H1 (cell line): ENCODE measurements at regions of chr5 and their contacts with region 1.

Region 1: GRCh38 chr5:150409638-150410523 is 2.8 kb downstream of the CD74 start:
- DNase-seq: peak; percentile 44 to 80
- H3K4me3 ChIP-seq: peak overlapping the region; percentile 9 to 37 (median 29); a peak in 6 of 8 replicates
- H3K27ac ChIP-seq: no peak overlapping the region
- H3K4me1 ChIP-seq: peaks cover 8 to 27% (median 13%) of the 10 kb centered on the region in 4 experiments
- H3K27me3 ChIP-seq: no peaks in the 10 kb centered on the region
- CTCF ChIP-seq: no peak
- EP300 ChIP-seq: no peak
- POLR2A ChIP-seq: no peak
- RAD21 ChIP-seq: no peak

Region 2: DNA sequence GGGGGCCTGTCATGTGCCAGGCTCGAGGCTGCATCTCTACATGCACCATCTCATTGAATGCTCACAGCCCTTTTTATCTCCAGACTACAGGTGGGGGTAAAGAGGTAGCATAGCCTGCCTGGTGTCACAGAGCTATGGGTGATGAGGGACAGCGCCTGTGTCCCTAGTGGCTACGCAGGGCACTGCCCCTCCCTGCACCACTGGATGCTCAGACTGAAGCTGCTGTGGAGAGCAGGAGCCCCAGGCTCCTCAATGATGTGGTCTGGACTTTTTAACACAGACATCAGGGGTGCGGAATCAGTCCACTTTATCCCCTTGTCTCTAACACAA is 123.0 kb before region 1 on chr5:
- CTCF ChIA-PET with region 1: no interaction called
- POLR2A ChIA-PET with region 1: no interaction called
- DNase-seq: peak in 1 of 2 experiments; percentile 57
- H3K4me3 ChIP-seq: no peak overlapping the region
- H3K27ac ChIP-seq: no peak overlapping the region
- H3K4me1 ChIP-seq: peaks cover 0 to 3% (median 0%) of the 10 kb centered on the region in 4 experiments; a peak in 2 of 7 replicates
- H3K27me3 ChIP-seq: no peaks in the 10 kb centered on the region; a peak in 1 of 7 replicates
- CTCF ChIP-seq: peak in 2 of 3 experiments; percentile 93 to 97; a peak in 3 of 4 replicates
- EP300 ChIP-seq: no peak
- POLR2A ChIP-seq: no peak
- RAD21 ChIP-seq: peak; percentile 55 to 68

Region 3: DNA sequence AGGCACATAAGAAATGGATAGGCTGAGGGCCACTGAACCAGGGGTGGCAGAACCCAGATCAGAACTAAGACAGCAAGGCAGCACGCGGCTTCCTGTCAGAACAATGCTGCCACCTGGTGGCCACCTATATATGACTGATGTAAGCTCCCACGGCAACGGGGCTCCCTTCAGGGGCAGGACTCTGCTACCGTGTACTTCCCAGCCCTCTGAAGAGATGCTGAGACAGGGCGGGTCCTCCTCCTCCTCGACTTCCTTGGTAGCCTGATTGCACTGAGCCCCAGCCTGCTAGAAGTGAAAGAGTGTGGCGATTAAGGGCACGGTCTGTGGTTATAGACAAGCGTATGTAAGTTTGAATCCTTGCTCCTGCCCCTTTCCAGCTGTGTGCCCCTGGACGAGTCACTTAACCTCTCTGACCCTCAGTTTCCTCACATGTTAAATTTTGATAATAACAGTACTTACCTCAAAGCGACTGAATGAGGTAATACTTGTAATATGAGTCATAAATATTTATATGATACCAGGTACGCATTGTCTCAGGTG is 26.3 kb after region 1 on chr5:
- CTCF ChIA-PET with region 1: interaction called, 245 read pairs
- POLR2A ChIA-PET with region 1: interaction called, 17 read pairs
- DNase-seq: peak; percentile 75 to 97
- H3K4me3 ChIP-seq: no peak overlapping the region
- H3K27ac ChIP-seq: no peak overlapping the region
- H3K4me1 ChIP-seq: peaks cover 0 to 4% (median 1%) of the 10 kb centered on the region in 4 experiments; a peak in 2 of 7 replicates
- H3K27me3 ChIP-seq: no peaks in the 10 kb centered on the region
- CTCF ChIP-seq: peak; percentile 85 to 93 (median 88)
- EP300 ChIP-seq: no peak
- POLR2A ChIP-seq: no peak
- RAD21 ChIP-seq: peak; percentile 88 to 90

Region 4: GRCh38 chr5:150441813-150442698 is 32.2 kb after region 1 on chr5:
- CTCF ChIA-PET with region 1: interaction called, 245 read pairs
- POLR2A ChIA-PET with region 1: interaction called, 30 read pairs
- DNase-seq: peak in 1 of 2 experiments; percentile 60
- H3K4me3 ChIP-seq: no peak overlapping the region
- H3K27ac ChIP-seq: peak overlapping the region; percentile 8; the same call in 1 of the 2 replicates
- H3K4me1 ChIP-seq: peaks cover 0 to 7% (median 2%) of the 10 kb centered on the region in 4 experiments; a peak in 5 of 7 replicates
- H3K27me3 ChIP-seq: no peaks in the 10 kb centered on the region
- CTCF ChIP-seq: no peak
- EP300 ChIP-seq: no peak
- POLR2A ChIP-seq: peak in 1 of 2 experiments; percentile 60; a peak in 2 of 3 replicates
- RAD21 ChIP-seq: no peak